AG04450 (cell line): ENCODE measurements at regions of chr19 and their contacts with region 1.

Region 1: DNA sequence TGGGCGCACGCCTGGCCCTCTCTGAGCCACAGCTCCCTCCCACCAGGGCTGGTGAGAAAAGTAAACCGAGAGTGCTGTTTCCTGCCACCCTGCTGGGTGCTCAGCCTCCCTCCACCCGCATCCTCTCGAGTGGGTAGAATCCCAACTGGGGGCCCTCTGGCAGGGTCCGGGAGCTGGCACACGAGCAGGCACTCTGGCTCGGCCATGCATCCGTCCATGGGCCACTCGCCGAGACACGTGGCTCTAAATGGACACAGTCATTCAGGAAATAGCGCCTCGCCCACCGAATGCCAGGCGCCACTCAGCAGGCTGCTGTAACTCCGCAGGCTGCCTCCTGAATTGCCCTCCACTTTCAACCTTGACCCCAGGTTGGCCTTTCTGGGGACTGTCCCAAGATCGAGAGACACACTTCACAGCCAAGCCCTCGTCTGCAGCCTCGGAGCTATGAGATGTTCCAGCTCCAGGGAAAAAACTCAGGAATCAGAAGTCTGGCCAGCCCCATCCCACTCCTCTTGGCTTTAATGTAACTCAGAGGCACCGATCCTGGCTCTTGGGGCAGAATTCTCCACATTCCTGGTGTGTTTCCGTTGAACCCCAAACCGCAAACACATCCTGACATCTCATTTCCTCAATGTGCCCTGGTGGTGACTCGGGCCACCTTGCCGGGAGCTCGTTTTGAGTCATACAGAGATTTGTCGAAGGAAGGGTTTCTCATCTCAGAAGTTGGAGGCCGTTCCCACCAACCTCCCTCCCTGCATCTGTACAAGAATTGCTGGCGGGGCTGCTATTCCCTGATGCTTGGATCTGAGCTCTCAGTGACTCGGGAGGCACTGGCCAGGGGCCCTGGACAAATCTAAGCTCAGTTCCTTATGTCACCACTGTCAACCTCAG is 14.1 kb downstream of the KLF2 start:
- DNase-seq: peak; percentile 69
- H3K4me3 ChIP-seq: no peak overlapping the region
- H3K27ac ChIP-seq: peak overlapping the region; percentile 81
- H3K27me3 ChIP-seq: no peaks in the 10 kb centered on the region
- CTCF ChIP-seq: peak; percentile 21; the same call in 1 of the 2 replicates

Region 2: GRCh38 chr19:16247353-16248182 is 91.1 kb before region 1 on chr19:
- CTCF ChIA-PET with region 1: interaction called, 10 read pairs
- POLR2A ChIA-PET with region 1: no interaction called
- DNase-seq: peak; percentile 37
- H3K4me3 ChIP-seq: no peak overlapping the region
- H3K27ac ChIP-seq: no peak overlapping the region
- H3K27me3 ChIP-seq: no peaks in the 10 kb centered on the region
- CTCF ChIP-seq: peak; percentile 96

Region 3: DNA sequence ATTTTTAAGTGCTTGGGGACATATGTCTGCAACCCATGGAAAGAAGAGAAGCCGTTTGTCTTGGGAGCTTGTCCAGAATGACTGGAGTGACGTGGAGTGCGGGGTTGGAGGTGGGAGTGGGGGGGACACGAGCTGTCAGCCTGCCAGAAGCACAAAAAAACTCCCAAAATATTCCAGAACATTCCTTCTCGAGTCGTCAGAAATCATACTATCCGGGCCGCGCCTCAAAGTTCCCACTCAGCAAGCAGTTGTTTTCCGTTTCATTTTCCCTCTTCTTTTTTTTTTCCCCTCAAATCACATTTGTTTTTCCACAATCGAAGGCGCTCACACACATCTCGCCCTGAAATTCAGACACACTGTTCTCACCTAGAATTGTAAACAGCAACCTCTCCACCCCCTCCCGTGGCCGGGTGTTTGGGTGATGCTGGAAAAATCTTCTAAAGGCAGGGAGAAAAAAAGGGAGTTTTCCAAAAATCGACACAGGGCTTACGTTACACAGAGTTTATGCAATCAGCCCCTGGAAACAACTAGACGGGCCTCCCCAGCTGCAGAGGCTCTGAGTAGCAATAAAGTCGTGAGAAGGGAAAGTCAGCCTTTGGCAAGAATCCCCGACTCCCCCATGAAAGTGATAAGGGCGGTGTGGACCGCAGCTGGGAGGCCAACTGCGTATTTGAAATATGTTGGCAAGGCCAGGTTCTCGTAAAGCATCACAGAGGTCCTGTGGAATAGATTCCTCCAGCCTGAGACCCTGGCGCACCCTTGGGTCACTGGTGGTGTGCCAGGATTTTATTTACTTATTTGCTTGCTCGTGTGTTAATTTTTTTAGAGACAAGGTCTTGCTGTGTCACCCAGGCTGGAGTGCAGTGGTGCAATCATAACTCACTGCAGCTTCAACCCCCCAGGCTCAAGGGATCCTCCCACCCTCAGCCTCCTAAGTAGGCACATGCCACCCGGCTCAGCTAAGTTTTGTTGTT is 45.3 kb before region 1 on chr19:
- CTCF ChIA-PET with region 1: no interaction called
- POLR2A ChIA-PET with region 1: no interaction called
- DNase-seq: peak; percentile 96
- H3K4me3 ChIP-seq: peak overlapping the region; percentile 54
- H3K27ac ChIP-seq: peak overlapping the region; percentile 99
- H3K27me3 ChIP-seq: peaks cover 12% of the 10 kb centered on the region
- CTCF ChIP-seq: no peak

Region 4: GRCh38 chr19:16315825-16316505 is 22.8 kb before region 1 on chr19:
- CTCF ChIA-PET with region 1: no interaction called
- POLR2A ChIA-PET with region 1: interaction called, 12 read pairs
- DNase-seq: peak; percentile 98
- H3K4me3 ChIP-seq: peak overlapping the region; percentile 45
- H3K27ac ChIP-seq: peak overlapping the region; percentile 96
- H3K27me3 ChIP-seq: no peaks in the 10 kb centered on the region
- CTCF ChIP-seq: no peak

Region 5: GRCh38 chr19:16324384-16325160 is 14.1 kb before region 1 on chr19 and contains the start of gene KLF2:
- CTCF ChIA-PET with region 1: interaction called, 3 read pairs
- POLR2A ChIA-PET with region 1: interaction called, 33 read pairs
- DNase-seq: peak; percentile 67
- H3K4me3 ChIP-seq: peak within 1 kb of the TSS; percentile 72
- H3K27ac ChIP-seq: peak within 1 kb of the TSS; percentile 87
- H3K27me3 ChIP-seq: no peaks in the 10 kb centered on the region
- CTCF ChIP-seq: no peak
- polyA plus RNA-seq, gene KLF2: 0.60 and 1.5 TPM in 2 replicates